CD8-positive, alpha-beta T cell (primary cell): ENCODE measurements at regions of chr7 and their contacts with region 1.

Region 1: DNA sequence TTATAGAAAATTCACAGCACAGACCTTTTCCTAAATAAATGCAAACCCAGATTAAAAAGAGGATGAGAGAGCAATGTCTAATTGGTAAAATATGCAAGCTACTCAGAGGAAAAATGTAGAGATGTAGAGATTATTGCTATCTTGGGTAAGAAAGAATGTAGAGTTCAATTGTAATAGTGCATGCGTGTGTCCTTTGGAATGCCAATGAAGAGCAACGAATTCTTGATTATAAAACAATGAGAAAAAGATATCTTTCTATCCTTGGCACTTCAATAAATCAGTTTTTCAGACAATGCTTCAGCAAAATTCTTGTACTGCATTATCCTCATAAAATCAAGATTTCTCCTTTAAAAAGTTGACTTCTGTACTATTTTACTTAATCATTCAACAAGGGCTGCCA is 50.9 kb downstream of the SEMA3D start:
- DNase-seq: no peak
- ATAC-seq: no peak
- H3K4me3 ChIP-seq: no peak overlapping the region
- H3K4me3 Mint-ChIP-seq: no peak overlapping the region
- H3K27ac ChIP-seq: no peak overlapping the region
- H3K27ac Mint-ChIP-seq: no peak overlapping the region
- H3K4me1 ChIP-seq: no peaks in the 10 kb centered on the region
- H3K4me1 Mint-ChIP-seq: no peaks in the 10 kb centered on the region
- H3K27me3 ChIP-seq: no peaks in the 10 kb centered on the region
- H3K27me3 Mint-ChIP-seq: no peaks in the 10 kb centered on the region
- CTCF ChIP-seq: no peak

Region 2: GRCh38 chr7:85094046-85094725 is 41.8 kb before region 1 on chr7:
- CTCF ChIA-PET with region 1: no interaction called
- POLR2A ChIA-PET with region 1: no interaction called
- intact Hi-C with region 1: no loop called
- DNase-seq: no peak
- ATAC-seq: no peak
- H3K4me3 ChIP-seq: no peak overlapping the region
- H3K4me3 Mint-ChIP-seq: no peak overlapping the region
- H3K27ac ChIP-seq: no peak overlapping the region
- H3K27ac Mint-ChIP-seq: no peak overlapping the region
- H3K4me1 ChIP-seq: no peaks in the 10 kb centered on the region
- H3K4me1 Mint-ChIP-seq: no peaks in the 10 kb centered on the region
- H3K27me3 ChIP-seq: no peaks in the 10 kb centered on the region
- H3K27me3 Mint-ChIP-seq: no peaks in the 10 kb centered on the region
- CTCF ChIP-seq: no peak

Region 3: DNA sequence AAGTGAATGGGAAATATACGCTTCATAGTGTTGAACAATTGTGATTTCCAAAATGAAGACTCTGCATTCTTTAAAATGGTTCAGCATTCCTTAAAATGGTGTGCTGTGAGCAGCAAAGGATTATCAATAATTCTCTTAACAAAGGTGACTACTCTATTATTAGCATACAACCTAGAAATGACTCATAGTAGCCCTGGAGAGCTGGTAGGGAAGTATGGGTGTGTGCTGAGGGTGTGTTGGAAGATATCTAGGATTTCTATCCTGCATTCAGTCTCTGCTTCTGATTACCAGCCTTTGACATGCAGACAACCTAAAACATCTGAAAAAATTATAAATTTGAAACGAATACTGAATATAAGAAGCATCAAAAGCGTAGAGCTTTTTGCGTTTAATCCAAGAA is 21.6 kb before region 1 on chr7:
- CTCF ChIA-PET with region 1: no interaction called
- POLR2A ChIA-PET with region 1: no interaction called
- intact Hi-C with region 1: loop called in 1 of 2 experiments (anchors 2 kb)
- DNase-seq: no peak
- ATAC-seq: no peak
- H3K4me3 ChIP-seq: no peak overlapping the region
- H3K4me3 Mint-ChIP-seq: no peak overlapping the region
- H3K27ac ChIP-seq: no peak overlapping the region
- H3K27ac Mint-ChIP-seq: no peak overlapping the region
- H3K4me1 ChIP-seq: no peaks in the 10 kb centered on the region
- H3K4me1 Mint-ChIP-seq: no peaks in the 10 kb centered on the region
- H3K27me3 ChIP-seq: no peaks in the 10 kb centered on the region
- H3K27me3 Mint-ChIP-seq: no peaks in the 10 kb centered on the region
- CTCF ChIP-seq: no peak